MCF 10A (cell line): ENCODE measurements at regions of chr17 and their contacts with region 1.

Region 1: GRCh38 chr17:42629411-42630009 is 20.0 kb downstream of the TUBG1 start:
- DNase-seq: peak; percentile 87
- H3K4me3 Mint-ChIP-seq: no peak overlapping the region
- H3K27ac Mint-ChIP-seq: peak overlapping the region; percentile 74
- H3K4me1 Mint-ChIP-seq: peaks cover 10% of the 10 kb centered on the region
- H3K27me3 Mint-ChIP-seq: no peaks in the 10 kb centered on the region
- CTCF ChIP-seq: no peak

Region 2: GRCh38 chr17:42618442-42619150 is 10.9 kb before region 1 on chr17:
- CTCF ChIA-PET with region 1: interaction called, 5 read pairs
- POLR2A ChIA-PET with region 1: interaction called, 18 read pairs
- intact Hi-C with region 1: no loop called
- DNase-seq: peak; percentile 80
- H3K4me3 Mint-ChIP-seq: no peak overlapping the region
- H3K27ac Mint-ChIP-seq: peak overlapping the region; percentile 42
- H3K4me1 Mint-ChIP-seq: peaks cover 15% of the 10 kb centered on the region
- H3K27me3 Mint-ChIP-seq: no peaks in the 10 kb centered on the region
- CTCF ChIP-seq: peak; percentile 47

Region 3: GRCh38 chr17:42659079-42659931 is 29.8 kb after region 1 on chr17 and contains the start of gene TUBG2:
- CTCF ChIA-PET with region 1: interaction called, 5 read pairs
- POLR2A ChIA-PET with region 1: interaction called, 19 read pairs
- intact Hi-C with region 1: no loop called
- DNase-seq: peak; percentile 88
- H3K4me3 Mint-ChIP-seq: peak within 1 kb of the TSS; percentile 88
- H3K27ac Mint-ChIP-seq: peak within 1 kb of the TSS; percentile 70
- H3K4me1 Mint-ChIP-seq: peaks cover 16% of the 10 kb centered on the region
- H3K27me3 Mint-ChIP-seq: no peaks in the 10 kb centered on the region
- CTCF ChIP-seq: no peak
- total RNA-seq, gene TUBG2: 21.3 and 23.4 TPM in 2 replicates

Region 4: DNA sequence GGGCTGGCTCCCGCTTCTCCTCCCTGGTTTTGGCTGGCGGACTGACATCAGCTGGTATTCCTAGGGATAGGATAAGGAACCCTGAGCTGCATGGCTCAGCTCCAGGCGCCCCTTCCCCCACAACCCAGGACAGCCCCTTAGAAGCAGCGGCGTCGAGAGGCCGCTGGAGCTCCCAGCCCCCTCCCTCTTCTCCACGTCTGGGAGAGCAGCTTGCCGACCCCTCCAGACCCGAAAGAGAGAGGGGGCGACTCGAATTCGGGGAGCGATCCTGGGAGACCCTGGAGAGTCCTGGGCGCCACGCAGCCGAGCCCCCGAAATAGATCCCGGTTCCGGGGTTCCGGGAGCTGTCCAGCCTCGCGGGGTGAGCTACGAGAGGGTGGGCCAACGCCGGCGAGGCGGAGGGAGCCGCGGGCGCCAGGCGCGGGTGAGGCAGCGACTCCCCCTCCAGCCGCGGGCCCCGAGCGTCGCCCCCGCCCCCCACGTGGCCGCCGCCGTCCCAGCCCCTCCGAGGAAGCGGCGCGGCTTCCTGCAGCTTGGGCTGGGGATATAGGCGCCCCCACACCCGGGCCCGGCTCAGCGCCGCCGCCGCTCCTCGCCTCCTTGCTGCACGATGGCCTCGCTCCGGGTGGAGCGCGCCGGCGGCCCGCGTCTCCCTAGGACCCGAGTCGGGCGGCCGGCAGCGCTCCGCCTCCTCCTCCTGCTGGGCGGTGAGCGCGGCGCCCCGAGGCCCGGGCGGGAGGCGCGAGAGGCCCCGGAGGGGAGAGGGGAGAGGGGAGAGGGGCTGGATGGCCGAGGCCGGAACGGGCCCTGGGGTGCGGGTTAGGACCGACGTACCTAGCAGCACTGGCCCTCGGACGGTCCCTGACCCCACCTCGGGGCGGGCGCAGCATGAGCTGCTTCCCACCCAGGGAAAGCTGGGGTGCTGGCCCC is 131.4 kb after region 1 on chr17 and contains the start of gene RAMP2:
- CTCF ChIA-PET with region 1: no interaction called
- POLR2A ChIA-PET with region 1: no interaction called
- intact Hi-C with region 1: no loop called
- DNase-seq: no peak
- H3K4me3 Mint-ChIP-seq: no peak within 1 kb of the TSS
- H3K27ac Mint-ChIP-seq: no peak within 1 kb of the TSS
- H3K4me1 Mint-ChIP-seq: peaks cover 5% of the 10 kb centered on the region
- H3K27me3 Mint-ChIP-seq: peaks cover 20% of the 10 kb centered on the region
- CTCF ChIP-seq: no peak
- total RNA-seq, gene RAMP2: not detected in 2 replicates

Region 5: GRCh38 chr17:43062984-43063638 is 433.6 kb after region 1 on chr17:
- CTCF ChIA-PET with region 1: no interaction called
- POLR2A ChIA-PET with region 1: no interaction called
- intact Hi-C with region 1: no loop called
- DNase-seq: no peak
- H3K4me3 Mint-ChIP-seq: no peak overlapping the region
- H3K27ac Mint-ChIP-seq: peak overlapping the region; percentile 36
- H3K4me1 Mint-ChIP-seq: no peaks in the 10 kb centered on the region
- H3K27me3 Mint-ChIP-seq: no peaks in the 10 kb centered on the region
- CTCF ChIP-seq: no peak